MCF 10A (cell line): ENCODE measurements at regions of chr1 and their contacts with region 1.

Region 1: GRCh38 chr1:983799-984473 is 2.0 kb upstream of the PERM1 start:
- DNase-seq: no peak
- H3K4me3 Mint-ChIP-seq: no peak overlapping the region
- H3K27ac Mint-ChIP-seq: no peak overlapping the region
- H3K4me1 Mint-ChIP-seq: no peaks in the 10 kb centered on the region
- H3K27me3 Mint-ChIP-seq: peaks cover 28% of the 10 kb centered on the region
- CTCF ChIP-seq: peak; percentile 98

Region 2: DNA sequence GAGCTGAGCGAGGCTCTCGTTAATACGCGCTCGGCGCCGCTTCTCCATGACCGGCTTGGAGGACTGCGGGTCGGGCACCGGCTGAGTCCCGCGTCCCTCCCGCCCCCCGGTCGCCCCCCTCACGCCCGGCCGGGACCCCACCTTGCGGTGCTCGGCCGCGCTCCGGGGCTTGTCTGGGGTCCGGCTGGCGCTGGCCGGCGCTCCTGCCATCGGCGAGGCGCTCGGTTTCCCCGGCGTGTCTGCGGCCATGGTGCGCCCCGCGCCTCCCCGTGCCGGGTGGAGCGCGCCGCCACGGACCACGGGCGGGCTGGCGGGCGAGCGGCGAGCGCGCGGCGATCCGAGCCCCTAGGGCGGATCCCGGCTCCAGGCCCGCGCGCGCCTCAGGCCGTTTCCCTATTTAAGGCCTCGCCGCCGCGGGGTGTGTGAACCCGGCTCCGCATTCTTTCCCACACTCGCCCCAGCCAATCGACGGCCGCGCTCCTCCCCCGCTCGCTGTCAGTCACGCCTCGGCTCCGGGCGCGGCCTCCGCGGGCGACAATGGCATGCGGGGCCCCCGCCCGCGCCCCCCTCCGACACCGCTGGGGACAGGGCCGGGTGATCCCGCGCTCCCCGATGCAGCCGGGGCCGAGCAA is 15.9 kb after region 1 on chr1 and contains the start of gene HES4:
- CTCF ChIA-PET with region 1: interaction called, 34 read pairs
- POLR2A ChIA-PET with region 1: interaction called, 3 read pairs
- intact Hi-C with region 1: no loop called
- DNase-seq: peak; percentile 92
- H3K4me3 Mint-ChIP-seq: peak within 1 kb of the TSS; percentile 82
- H3K27ac Mint-ChIP-seq: peak within 1 kb of the TSS; percentile 94
- H3K4me1 Mint-ChIP-seq: peaks cover 13% of the 10 kb centered on the region
- H3K27me3 Mint-ChIP-seq: no peaks in the 10 kb centered on the region
- CTCF ChIP-seq: no peak
- total RNA-seq, gene HES4: 42.1 and 42.6 TPM in 2 replicates

Region 3: GRCh38 chr1:1115786-1116700 is 132.1 kb after region 1 on chr1 and contains the start of gene C1orf159:
- CTCF ChIA-PET with region 1: interaction called, 7 read pairs
- POLR2A ChIA-PET with region 1: no interaction called
- intact Hi-C with region 1: loop called (anchors 1 kb)
- DNase-seq: peak; percentile 97
- H3K4me3 Mint-ChIP-seq: peak within 1 kb of the TSS; percentile 83
- H3K27ac Mint-ChIP-seq: peak within 1 kb of the TSS; percentile 83
- H3K4me1 Mint-ChIP-seq: no peaks in the 10 kb centered on the region
- H3K27me3 Mint-ChIP-seq: no peaks in the 10 kb centered on the region
- CTCF ChIP-seq: no peak
- total RNA-seq, gene C1orf159: 15.7 and 18.6 TPM in 2 replicates

Region 4: GRCh38 chr1:1752665-1753606 is 769.0 kb after region 1 on chr1:
- CTCF ChIA-PET with region 1: no interaction called
- POLR2A ChIA-PET with region 1: no interaction called
- intact Hi-C with region 1: no loop called
- DNase-seq: no peak
- H3K4me3 Mint-ChIP-seq: no peak overlapping the region
- H3K27ac Mint-ChIP-seq: no peak overlapping the region
- H3K4me1 Mint-ChIP-seq: peaks cover 2% of the 10 kb centered on the region
- H3K27me3 Mint-ChIP-seq: no peaks in the 10 kb centered on the region
- CTCF ChIP-seq: no peak